ENCODE measurements at regions of chr12 and their contacts with region 1.

Region 1: DNA sequence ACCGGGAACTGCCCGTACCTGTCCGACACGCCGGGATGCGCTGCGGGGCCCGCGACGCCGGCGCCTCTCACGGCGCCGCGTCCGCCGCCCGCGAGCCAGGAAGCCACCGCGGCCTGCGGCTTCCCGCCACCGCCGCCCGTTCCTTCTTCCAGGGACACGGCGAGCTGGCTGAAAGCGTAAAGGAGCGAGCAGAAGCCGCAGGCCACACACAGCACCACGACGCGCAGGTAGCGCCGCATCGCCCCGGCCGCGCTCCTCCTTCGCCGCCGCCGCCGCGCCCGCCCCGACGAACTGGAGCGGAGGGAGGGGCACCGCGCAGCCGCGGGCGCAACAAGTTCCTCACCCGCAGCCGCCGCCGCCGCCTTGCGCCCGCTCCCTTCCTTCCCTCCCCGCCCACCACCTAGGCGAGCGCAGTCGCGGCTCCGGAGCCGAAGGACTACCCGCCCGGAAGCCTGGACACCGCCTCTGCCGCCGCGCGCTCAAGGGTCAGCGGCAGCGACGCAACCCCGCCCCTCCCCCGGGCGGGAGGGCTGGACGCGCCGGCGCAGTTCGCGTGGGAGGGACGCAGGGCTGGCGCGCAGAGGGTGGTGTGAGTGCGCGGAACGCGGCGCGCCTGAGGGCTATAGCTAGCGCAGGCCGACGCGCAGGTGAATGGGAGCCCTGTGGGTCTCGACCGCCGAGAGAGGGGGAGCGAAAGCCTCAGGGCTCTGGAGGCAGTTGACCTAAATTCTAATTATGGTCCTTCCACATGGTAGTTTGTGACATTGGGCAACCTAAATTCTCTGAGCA is at the start of gene GXYLT1:
- DNase-seq: peak; percentile 87
- ATAC-seq: peak; percentile 94
- H3K4me3 Mint-ChIP-seq: peak within 1 kb of the TSS; percentile 95
- H3K27ac Mint-ChIP-seq: peak within 1 kb of the TSS; percentile 83
- H3K4me1 Mint-ChIP-seq: peaks cover 40% of the 10 kb centered on the region
- H3K27me3 Mint-ChIP-seq: no peaks in the 10 kb centered on the region
- CTCF ChIP-seq: no peak
- total RNA-seq, gene GXYLT1: 6.9 and 7.9 TPM in 2 replicates

Region 2: GRCh38 chr12:42129595-42130204 is 14.9 kb before region 1 on chr12:
- CTCF ChIA-PET with region 1: no interaction called
- POLR2A ChIA-PET with region 1: no interaction called
- intact Hi-C with region 1: loop called (anchors 2 kb)
- DNase-seq: no peak
- ATAC-seq: peak; percentile 52
- H3K4me3 Mint-ChIP-seq: no peak overlapping the region
- H3K27ac Mint-ChIP-seq: no peak overlapping the region
- H3K4me1 Mint-ChIP-seq: peaks cover 15% of the 10 kb centered on the region
- H3K27me3 Mint-ChIP-seq: no peaks in the 10 kb centered on the region
- CTCF ChIP-seq: no peak

Region 3: DNA sequence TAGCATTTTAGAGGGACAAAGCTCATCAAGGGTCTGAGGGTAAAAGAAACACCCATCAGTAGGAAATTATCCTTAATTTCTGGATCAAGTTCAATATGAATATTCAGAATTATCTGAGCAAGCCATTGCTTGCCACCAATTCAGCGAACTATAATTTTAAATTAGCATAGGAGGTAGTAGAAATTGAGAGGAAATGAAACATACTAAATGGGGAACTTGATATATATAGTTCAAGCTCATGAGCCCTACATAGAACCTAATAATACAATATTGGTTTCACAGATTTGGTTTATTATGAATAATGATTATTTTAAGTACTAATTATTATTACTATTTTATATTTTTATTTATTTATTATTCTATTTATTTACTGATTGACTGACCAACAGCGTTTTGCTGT is 42.2 kb after region 1 on chr12:
- CTCF ChIA-PET with region 1: no interaction called
- POLR2A ChIA-PET with region 1: interaction called, 3 read pairs
- intact Hi-C with region 1: loop called (anchors 2 kb)
- DNase-seq: no peak
- ATAC-seq: peak; percentile 92
- H3K4me3 Mint-ChIP-seq: no peak overlapping the region
- H3K27ac Mint-ChIP-seq: no peak overlapping the region
- H3K4me1 Mint-ChIP-seq: peaks cover 46% of the 10 kb centered on the region
- H3K27me3 Mint-ChIP-seq: no peaks in the 10 kb centered on the region
- CTCF ChIP-seq: no peak

Region 4: GRCh38 chr12:42325653-42326474 is 181.3 kb after region 1 on chr12 and contains the starts of genes PPHLN1 and ZCRB1:
- CTCF ChIA-PET with region 1: no interaction called
- POLR2A ChIA-PET with region 1: interaction called, 3 read pairs
- intact Hi-C with region 1: loop called (anchors 1 kb)
- DNase-seq: peak; percentile 73
- ATAC-seq: peak; percentile 89
- H3K4me3 Mint-ChIP-seq: peak within 1 kb of the TSS; percentile 94
- H3K27ac Mint-ChIP-seq: peak within 1 kb of the TSS; percentile 90
- H3K4me1 Mint-ChIP-seq: peaks cover 51% of the 10 kb centered on the region
- H3K27me3 Mint-ChIP-seq: no peaks in the 10 kb centered on the region
- CTCF ChIP-seq: no peak
- total RNA-seq, gene PPHLN1: 94.0 and 95.9 TPM in 2 replicates
- total RNA-seq, gene ZCRB1: 37.4 and 37.6 TPM in 2 replicates

Region 5: DNA sequence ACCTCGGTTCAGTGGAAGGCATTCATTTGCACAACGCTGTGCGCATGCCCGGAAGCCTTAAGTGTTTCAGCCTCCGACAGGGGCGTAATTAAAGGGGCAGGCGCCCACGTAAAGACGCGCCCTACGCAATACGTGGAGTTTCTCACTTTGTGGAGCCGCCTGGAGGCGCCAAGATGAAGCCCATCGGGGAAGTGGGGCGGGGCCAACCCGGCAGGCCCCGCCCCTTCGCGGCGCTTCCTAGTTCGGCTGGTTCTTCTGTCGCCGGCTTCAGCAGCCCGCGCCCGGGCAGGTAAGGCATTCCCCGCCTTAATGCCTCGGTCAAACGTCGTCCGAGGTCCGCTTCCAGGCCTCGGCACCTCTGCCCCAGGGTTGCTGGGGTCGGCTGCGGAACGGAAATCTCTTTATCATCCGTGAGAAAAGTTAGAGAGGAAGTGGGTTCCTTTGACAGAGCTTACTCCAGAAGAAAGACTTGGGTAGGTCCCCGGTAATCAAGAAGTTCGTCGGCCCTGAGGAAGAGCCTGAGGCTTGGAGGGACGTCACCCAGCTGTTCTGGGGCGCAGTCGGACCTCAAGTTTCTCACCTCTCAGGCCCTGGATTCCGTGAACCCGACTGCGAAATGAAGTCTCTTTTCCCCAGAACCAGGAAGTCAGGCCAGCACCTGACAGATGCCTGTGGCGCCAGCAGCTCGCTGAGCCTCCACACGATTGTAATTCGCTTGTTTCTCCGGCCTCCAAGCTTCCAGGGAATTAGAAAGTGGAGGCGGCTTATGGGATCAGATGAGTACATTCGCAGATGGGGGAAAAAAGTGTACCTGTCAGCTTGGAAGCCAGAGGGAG is 1614.3 kb after region 1 on chr12 and contains the starts of genes IRAK4 and PUS7L:
- CTCF ChIA-PET with region 1: no interaction called
- POLR2A ChIA-PET with region 1: no interaction called
- intact Hi-C with region 1: loop called (anchors 2 kb)
- DNase-seq: peak; percentile 83
- ATAC-seq: peak; percentile 98
- H3K4me3 Mint-ChIP-seq: peak within 1 kb of the TSS; percentile 98
- H3K27ac Mint-ChIP-seq: peak within 1 kb of the TSS; percentile 97
- H3K4me1 Mint-ChIP-seq: peaks cover 68% of the 10 kb centered on the region
- H3K27me3 Mint-ChIP-seq: no peaks in the 10 kb centered on the region
- CTCF ChIP-seq: no peak
- total RNA-seq, gene IRAK4: 38.4 and 40.8 TPM in 2 replicates
- total RNA-seq, gene PUS7L: 16.1 and 19.9 TPM in 2 replicates